Activated CD8-positive, alpha-beta T cell treated with anti-CD3 and anti-CD28 coated beads, Interleukin-2, amount 10 ng/mL, durations not matched to agents 7 days and 5 days (primary cell): ENCODE measurements at regions of chr14 and their contacts with region 1.

Region 1: DNA sequence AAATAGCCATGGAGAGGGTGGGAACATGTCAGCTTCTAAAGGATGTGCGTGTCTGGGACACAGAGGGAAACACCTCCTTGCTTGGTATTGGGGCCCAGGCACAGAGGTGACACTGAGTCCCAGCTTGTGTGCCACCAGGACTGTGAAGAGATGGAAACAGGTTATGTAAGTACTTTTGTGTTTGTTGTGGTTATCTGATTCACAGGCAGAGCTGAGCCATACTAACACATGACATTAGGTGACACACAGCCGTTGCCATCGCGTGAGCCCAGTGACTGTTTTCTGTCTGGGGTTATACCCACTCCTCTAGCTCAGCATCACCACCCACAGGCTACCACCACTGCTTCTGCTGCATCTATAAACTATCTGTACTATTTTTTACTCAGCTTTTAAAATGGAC is 12.1 kb upstream of the FLVCR2 start:
- DNase-seq: peak; percentile 78
- ATAC-seq: peak; percentile 95
- H3K4me3 Mint-ChIP-seq: no peak overlapping the region
- H3K27ac Mint-ChIP-seq: peak overlapping the region; percentile 48
- H3K4me1 Mint-ChIP-seq: peaks cover 49% of the 10 kb centered on the region
- H3K27me3 Mint-ChIP-seq: no peaks in the 10 kb centered on the region

Region 2: GRCh38 chr14:75514673-75515628 is 51.4 kb before region 1 on chr14:
- CTCF ChIA-PET with region 1: interaction called, 58 read pairs
- POLR2A ChIA-PET with region 1: interaction called, 3 read pairs
- DNase-seq: peak; percentile 61
- ATAC-seq: peak; percentile 77
- H3K4me3 Mint-ChIP-seq: peak overlapping the region; percentile 79
- H3K27ac Mint-ChIP-seq: peak overlapping the region; percentile 95
- H3K4me1 Mint-ChIP-seq: peaks cover 36% of the 10 kb centered on the region
- H3K27me3 Mint-ChIP-seq: no peaks in the 10 kb centered on the region

Region 3: DNA sequence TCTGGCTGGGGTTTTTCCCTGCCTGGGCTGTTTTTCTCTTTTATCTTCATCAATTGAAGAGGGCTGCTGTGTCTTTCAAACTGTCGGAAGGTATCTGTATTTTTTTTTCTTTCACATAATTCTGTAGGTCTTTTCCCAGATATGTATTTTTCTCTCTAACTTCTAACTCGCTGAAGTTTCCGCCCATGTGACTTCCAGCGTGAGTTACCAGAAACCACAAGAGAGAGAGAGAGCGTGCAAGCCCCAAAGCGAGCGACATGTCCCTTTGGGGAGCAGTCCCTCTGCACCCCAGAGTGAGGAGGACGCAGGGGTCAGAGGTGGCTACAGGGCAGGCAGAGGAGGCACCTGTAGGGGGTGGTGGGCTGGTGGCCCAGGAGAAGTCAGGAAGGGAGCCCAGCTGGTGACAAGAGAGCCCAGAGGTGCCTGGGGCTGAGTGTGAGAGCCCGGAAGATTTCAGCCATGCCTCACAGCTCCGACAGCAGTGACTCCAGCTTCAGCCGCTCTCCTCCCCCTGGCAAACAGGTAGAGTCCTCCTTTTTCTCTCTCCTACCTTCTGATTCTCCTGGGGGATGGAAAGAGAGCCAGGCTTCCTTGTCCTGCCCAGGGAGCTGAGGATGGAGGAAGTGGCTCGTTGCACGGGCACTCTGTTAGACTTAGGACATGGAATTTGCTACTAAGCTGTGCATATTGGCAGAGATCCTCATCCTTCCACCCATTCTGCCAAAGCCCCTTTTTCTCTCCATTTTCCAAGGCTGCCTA is 43.9 kb before region 1 on chr14 and contains the start of gene BATF:
- CTCF ChIA-PET with region 1: interaction called, 58 read pairs
- POLR2A ChIA-PET with region 1: interaction called, 8 read pairs
- DNase-seq: peak; percentile 87
- ATAC-seq: peak; percentile 84
- H3K4me3 Mint-ChIP-seq: peak within 1 kb of the TSS; percentile 100
- H3K27ac Mint-ChIP-seq: peak within 1 kb of the TSS; percentile 99
- H3K4me1 Mint-ChIP-seq: peaks cover 63% of the 10 kb centered on the region
- H3K27me3 Mint-ChIP-seq: no peaks in the 10 kb centered on the region
- total RNA-seq, gene BATF: 41.3 to 41.6 TPM

Region 4: DNA sequence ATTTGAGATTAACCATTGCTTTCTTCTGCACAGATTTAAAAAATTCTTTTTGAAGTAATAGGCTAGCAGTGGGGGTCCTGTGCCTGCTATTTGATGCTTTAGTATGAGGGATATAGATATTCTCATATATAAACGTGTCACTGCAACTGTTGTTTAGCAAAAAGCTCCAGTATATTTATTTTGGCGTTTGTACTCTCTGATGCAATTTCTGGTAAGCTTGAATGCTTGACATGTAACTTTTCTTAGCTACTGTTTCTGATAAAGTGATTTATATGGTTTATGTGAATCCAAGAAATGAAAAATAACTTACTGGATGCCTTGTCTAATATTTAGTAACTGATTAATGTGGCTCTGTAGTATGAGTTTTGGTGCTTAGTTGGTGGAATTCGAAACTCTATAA is 171.9 kb after region 1 on chr14:
- CTCF ChIA-PET with region 1: no interaction called
- POLR2A ChIA-PET with region 1: no interaction called
- DNase-seq: no peak
- ATAC-seq: no peak
- H3K4me3 Mint-ChIP-seq: no peak overlapping the region
- H3K27ac Mint-ChIP-seq: no peak overlapping the region
- H3K4me1 Mint-ChIP-seq: no peaks in the 10 kb centered on the region
- H3K27me3 Mint-ChIP-seq: no peaks in the 10 kb centered on the region